K562 (cell line): ENCODE measurements at regions of chr18 and their contacts with region 1.

Region 1: DNA sequence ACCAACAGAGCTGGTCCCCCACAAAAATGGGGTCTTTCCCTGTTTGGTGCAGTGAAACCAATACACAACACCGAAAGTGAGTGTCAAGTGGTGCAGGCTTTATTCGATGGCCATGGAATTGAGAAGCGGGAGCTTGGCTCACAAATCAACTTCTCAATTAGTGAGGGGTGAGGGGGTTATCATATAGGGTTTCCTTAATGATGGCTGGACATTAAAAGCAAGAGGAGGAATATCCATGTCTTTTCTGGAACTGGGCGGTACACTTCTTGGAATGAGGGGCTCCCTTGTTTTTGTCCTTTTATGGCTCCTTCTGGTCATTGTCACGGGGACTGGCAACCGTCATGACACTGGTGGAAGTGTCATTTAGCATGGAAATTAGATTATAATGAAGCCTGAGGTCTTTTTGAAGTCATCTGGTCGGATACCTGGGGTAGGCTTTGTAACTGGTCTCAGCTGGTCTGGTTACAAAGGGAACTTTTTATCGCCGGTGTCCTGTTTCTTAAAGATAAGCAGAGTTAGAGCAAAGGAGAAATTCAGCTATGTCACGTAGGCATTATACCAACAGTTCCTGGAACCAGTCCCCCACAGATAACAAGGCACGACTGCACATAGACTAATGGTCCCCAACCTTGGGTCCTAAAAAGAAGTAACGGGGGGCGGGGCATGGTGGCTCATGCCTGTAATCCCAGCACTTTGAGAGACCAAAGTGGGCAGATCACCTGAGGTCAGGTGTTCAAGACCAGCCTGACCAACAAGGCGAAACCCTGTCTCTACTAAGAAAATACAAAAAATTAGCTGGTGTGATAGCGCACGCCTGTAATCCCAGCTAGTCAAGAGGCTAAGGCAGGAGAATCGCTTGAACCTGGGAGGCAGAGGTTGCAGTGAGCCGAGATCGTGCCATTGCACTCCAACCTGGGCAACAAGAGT is 93.5 kb upstream of the NDUFV2 start:
- DNase-seq: peak; percentile 82 to 99 (median 88)
- ATAC-seq: peak; percentile 90
- H3K4me3 ChIP-seq: peak overlapping the region; percentile 14; the same call in 1 of the 2 replicates
- H3K27ac ChIP-seq: peak overlapping the region; percentile 97
- H3K4me1 ChIP-seq: peaks cover 20 to 59% of the 10 kb centered on the region in 2 experiments
- H3K27me3 ChIP-seq: no peaks in the 10 kb centered on the region
- CTCF ChIP-seq: no peak
- EP300 ChIP-seq: peak; percentile 99
- POLR2A ChIP-seq: peak; percentile 38
- RAD21 ChIP-seq: peak; percentile 28 to 35; a peak in 3 of 4 replicates

Region 2: GRCh38 chr18:8998481-8999217 is 10.3 kb before region 1 on chr18:
- CTCF ChIA-PET with region 1: no interaction called
- POLR2A ChIA-PET with region 1: interaction called, 26 read pairs
- in situ Hi-C with region 1: no loop called
- intact Hi-C with region 1: no loop called
- DNase-seq: peak in 3 of 4 experiments; percentile 39 to 48 (median 40)
- ATAC-seq: peak; percentile 17; the same call in 2 of the 3 replicates
- H3K4me3 ChIP-seq: no peak overlapping the region
- H3K27ac ChIP-seq: peak overlapping the region; percentile 40; the same call in 2 of the 3 replicates
- H3K4me1 ChIP-seq: peaks cover 14 to 52% of the 10 kb centered on the region in 2 experiments
- H3K27me3 ChIP-seq: no peaks in the 10 kb centered on the region
- CTCF ChIP-seq: no peak
- EP300 ChIP-seq: peak; percentile 76
- POLR2A ChIP-seq: no peak
- RAD21 ChIP-seq: peak in 1 of 2 experiments; percentile 26; a peak in 2 of 4 replicates

Region 3: GRCh38 chr18:9102508-9103375 is 93.8 kb after region 1 on chr18 and contains the start of gene NDUFV2:
- CTCF ChIA-PET with region 1: no interaction called
- POLR2A ChIA-PET with region 1: no interaction called
- in situ Hi-C with region 1: no loop called
- intact Hi-C with region 1: no loop called
- DNase-seq: peak; percentile 99 to 100 (median 100)
- ATAC-seq: peak; percentile 90
- H3K4me3 ChIP-seq: peak within 1 kb of the TSS; percentile 51
- H3K27ac ChIP-seq: peak within 1 kb of the TSS; percentile 80
- H3K4me1 ChIP-seq: peaks cover 5 to 19% of the 10 kb centered on the region in 2 experiments
- H3K27me3 ChIP-seq: no peaks in the 10 kb centered on the region
- CTCF ChIP-seq: 0 out of 6 replicates have a peak, but pooled peaks of 1 of the 3 experiments have one; percentile 5
- EP300 ChIP-seq: no peak
- POLR2A ChIP-seq: peak; percentile 93
- RAD21 ChIP-seq: no peak
- polyA plus RNA-seq, gene NDUFV2: 384 to 550 TPM

Region 4: DNA sequence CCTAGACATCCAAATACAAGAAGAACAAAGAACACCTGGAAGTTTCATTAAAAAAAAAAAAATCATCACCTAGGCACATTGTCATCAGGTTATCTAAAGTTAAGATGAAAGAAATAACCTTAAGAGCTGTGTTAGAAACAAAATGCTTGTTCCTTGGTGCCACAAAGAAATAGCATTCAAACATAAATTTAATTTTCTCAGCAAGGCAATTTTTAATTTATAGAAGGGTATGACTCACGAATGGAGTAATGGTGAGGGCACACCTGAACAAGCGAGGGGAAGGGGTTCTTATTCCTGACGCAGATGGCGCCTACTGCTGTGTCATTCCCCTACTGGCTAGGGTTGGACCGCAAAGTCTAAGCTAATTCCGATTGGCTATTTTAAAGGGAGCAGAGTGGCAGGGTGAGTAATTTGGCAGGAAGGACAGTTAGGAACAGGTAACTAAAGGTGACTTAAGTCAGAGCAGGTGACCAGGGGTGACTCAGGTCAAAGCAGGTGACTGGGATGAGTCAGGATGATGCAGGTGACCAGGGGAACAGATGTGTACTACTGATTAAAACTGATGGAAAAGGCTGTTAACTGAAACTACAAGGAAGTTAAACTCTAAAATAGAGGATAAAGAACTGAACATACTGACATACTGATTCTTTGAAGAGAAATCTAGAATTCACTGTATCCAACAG is 295.6 kb after region 1 on chr18:
- CTCF ChIA-PET with region 1: no interaction called
- POLR2A ChIA-PET with region 1: no interaction called
- in situ Hi-C with region 1: no loop called
- intact Hi-C with region 1: no loop called
- DNase-seq: no peak
- ATAC-seq: no peak
- H3K4me3 ChIP-seq: no peak overlapping the region
- H3K27ac ChIP-seq: no peak overlapping the region
- H3K4me1 ChIP-seq: no peaks in the 10 kb centered on the region
- H3K27me3 ChIP-seq: no peaks in the 10 kb centered on the region
- CTCF ChIP-seq: no peak
- EP300 ChIP-seq: no peak
- POLR2A ChIP-seq: no peak
- RAD21 ChIP-seq: no peak